ENCODE measurements at regions of chr11 and their contacts with region 1.

Region 1: DNA sequence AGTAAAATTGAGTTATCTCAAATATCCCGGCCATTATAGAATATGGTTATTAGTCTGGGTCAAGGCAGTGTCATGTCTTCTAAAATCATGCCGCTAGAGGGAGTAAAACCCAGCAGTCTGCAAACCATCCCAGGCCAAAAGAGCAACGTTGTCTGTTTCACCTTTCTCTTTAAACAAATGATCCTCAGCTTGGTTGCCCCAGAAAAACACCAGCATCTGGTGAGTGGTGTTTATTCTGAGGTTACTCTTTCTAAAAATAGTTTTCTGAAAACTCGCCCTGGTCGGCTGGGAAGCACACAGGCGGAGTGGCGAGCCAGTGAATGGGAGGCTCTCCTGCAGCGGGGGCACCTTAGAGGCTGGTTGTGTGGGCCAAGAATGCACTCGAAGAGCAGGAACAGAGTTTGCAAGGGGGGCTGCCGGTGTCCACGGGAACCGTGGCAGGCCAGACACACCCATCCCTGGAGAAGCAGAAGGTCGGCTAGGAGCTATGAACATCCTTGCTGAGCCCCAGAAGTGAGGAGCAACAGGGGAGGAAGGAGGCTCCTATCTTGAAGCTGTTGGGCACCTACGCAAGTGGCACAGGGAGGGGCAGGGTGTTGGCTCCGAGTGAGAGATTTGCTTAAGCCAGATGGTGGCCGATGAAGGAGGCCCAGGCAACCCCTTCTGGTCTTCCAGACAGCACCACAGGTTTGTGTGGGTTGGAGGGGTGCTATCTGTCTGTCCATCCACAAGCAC is 297.1 kb downstream of the ETS1 start:
- DNase-seq: peak; percentile 94
- H3K4me3 Mint-ChIP-seq: peak overlapping the region; percentile 93
- H3K27ac Mint-ChIP-seq: peak overlapping the region; percentile 99
- H3K4me1 Mint-ChIP-seq: peaks cover 90% of the 10 kb centered on the region
- H3K27me3 Mint-ChIP-seq: no peaks in the 10 kb centered on the region

Region 2: DNA sequence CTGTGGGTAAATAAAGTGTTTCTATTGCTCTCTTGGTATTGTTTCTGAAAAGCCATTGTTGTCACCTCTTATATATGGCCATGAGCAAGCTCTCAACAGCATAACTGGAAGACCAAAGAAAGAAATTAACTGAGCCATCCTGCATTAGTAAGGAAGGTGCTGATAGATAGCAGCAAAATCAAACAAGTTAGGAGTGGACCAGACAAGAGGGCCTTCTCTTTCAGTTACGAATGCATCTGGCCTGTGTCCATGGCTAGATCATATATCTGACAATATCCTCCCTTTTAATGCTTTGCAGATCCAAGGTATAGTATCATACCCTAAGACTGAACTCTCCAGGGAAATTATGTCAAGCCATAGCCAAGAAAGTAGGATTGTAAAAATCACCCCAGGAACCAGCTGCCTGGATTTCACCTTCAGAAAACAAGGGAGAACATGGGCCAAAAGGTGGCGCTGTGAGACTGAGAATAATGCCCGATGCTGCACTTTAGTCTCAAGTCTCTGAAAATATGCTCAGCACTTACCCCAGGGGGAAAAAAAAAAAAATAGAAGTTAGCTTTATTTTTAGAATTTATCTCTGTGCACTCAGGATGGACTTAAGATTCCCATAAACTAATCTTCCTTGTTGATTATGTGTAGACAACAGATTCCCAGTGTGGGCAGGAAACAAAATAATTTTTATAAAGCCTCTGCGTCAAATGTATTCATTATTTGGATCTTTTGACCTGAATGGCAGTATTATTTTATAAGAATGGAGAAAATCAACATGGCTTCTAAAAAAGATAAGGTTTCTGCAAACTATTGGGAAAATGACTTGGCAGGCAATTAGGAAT is 118.0 kb before region 1 on chr11:
- intact Hi-C with region 1: loop called (anchors 1 kb)
- DNase-seq: peak; percentile 95
- H3K4me3 Mint-ChIP-seq: no peak overlapping the region
- H3K27ac Mint-ChIP-seq: peak overlapping the region; percentile 56
- H3K4me1 Mint-ChIP-seq: peaks cover 25% of the 10 kb centered on the region
- H3K27me3 Mint-ChIP-seq: peaks cover 13% of the 10 kb centered on the region

Region 3: DNA sequence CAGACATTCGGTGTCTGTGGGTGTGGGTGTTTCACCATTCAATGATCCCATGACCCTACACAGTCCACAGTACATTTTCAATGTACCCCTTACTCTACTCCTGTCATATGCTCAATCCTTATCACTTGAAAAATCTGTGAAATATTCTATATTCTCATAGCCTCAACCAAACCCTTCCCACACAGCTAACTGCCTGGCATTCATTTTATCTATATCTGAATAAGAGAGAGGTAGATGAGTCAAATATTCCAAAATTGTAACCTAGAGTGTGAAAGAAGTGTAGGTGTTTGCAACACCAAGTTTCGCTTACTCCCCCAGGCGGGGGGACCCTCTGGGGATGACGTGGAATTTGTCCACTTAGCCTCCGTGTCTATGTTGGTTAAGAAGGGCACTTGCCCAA is 57.7 kb before region 1 on chr11:
- intact Hi-C with region 1: loop called (anchors 1 kb)
- DNase-seq: peak; percentile 68
- H3K4me3 Mint-ChIP-seq: peak overlapping the region; percentile 55
- H3K27ac Mint-ChIP-seq: peak overlapping the region; percentile 90
- H3K4me1 Mint-ChIP-seq: peaks cover 41% of the 10 kb centered on the region
- H3K27me3 Mint-ChIP-seq: no peaks in the 10 kb centered on the region

Region 4: DNA sequence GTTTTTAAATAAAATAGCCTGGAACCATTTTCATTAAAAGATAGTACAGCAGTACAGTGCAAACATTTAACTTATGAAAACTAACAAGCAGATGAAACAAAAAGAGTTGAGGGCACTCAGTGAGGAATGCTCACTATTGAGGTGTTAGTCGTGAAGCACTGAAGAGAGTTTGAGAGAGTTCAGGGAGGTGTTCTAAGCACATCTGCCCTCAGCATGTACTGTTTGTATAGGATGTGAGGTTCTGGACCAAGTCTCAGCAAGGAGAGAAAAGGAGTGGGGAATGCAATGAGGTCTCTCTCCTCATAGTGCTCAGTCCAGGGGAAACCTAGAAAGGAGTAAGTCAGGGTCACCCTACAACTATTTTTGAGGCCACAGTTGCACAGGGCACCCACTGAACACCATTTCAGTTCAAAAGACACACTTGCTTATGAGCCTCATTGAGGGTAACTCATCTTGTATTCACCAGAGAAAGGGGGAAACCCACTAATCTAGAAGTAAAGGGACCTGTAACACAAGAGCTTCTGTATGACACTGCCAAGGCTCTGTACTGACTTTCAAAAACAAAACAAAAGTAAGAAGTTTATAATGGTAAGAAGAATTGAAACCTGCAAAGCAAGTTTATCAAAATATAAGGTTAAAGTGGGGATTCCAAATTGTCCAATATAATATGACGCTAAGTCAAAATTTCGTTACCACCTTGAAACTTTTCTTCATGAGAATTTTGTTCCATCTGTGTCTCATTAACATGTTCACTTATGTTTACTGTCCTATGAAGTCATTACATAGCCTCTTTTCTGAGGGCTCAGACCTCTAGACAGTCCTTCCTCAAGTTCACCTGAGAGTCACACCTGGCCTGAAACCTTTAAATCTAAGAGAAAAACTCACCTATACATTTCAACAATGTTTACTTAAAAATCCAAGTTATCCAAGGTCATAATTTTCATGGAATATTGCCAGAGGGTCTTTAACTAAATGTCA is 21.8 kb after region 1 on chr11:
- intact Hi-C with region 1: no loop called
- DNase-seq: peak; percentile 65
- H3K4me3 Mint-ChIP-seq: peak overlapping the region; percentile 42
- H3K27ac Mint-ChIP-seq: peak overlapping the region; percentile 88
- H3K4me1 Mint-ChIP-seq: peaks cover 57% of the 10 kb centered on the region
- H3K27me3 Mint-ChIP-seq: no peaks in the 10 kb centered on the region

Region 5: GRCh38 chr11:128342511-128343134 is 52.4 kb after region 1 on chr11:
- intact Hi-C with region 1: loop called (anchors 1 kb)
- DNase-seq: peak; percentile 90
- H3K4me3 Mint-ChIP-seq: peak overlapping the region; percentile 24
- H3K27ac Mint-ChIP-seq: peak overlapping the region; percentile 88
- H3K4me1 Mint-ChIP-seq: peaks cover 79% of the 10 kb centered on the region
- H3K27me3 Mint-ChIP-seq: no peaks in the 10 kb centered on the region

Region 6: DNA sequence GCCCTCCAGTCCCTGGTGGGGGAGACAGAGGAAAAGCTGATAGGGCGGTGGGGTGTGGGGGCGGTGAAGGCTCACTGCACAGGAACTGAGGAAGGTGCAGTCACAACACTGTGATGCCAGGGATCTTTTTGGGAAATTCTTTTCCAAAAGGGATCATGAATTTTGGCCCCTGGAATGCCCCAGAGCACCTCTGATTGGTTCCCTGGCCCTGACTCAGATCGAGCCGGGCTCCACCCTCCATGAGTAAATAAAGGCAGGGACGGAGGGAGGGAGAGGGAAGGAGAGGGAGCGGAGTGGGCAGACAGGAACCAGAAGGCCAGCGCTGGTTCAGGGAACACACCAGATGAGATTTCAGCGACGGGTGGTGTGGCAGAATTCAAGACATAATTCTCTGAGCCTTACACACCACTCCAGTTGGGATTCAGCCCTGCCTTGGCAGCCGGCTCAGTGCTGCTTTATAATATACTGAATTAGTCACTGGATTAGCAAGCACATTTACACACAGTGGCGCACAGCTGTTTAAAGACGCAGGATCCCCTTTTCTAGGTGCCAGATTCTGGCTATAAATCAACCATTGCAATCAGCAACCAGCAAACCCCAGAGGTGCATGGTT is 216.8 kb after region 1 on chr11:
- intact Hi-C with region 1: loop called (anchors 1 kb)
- DNase-seq: peak; percentile 78
- H3K4me3 Mint-ChIP-seq: peak overlapping the region; percentile 93
- H3K27ac Mint-ChIP-seq: peak overlapping the region; percentile 98
- H3K4me1 Mint-ChIP-seq: peaks cover 93% of the 10 kb centered on the region
- H3K27me3 Mint-ChIP-seq: no peaks in the 10 kb centered on the region

Region 7: DNA sequence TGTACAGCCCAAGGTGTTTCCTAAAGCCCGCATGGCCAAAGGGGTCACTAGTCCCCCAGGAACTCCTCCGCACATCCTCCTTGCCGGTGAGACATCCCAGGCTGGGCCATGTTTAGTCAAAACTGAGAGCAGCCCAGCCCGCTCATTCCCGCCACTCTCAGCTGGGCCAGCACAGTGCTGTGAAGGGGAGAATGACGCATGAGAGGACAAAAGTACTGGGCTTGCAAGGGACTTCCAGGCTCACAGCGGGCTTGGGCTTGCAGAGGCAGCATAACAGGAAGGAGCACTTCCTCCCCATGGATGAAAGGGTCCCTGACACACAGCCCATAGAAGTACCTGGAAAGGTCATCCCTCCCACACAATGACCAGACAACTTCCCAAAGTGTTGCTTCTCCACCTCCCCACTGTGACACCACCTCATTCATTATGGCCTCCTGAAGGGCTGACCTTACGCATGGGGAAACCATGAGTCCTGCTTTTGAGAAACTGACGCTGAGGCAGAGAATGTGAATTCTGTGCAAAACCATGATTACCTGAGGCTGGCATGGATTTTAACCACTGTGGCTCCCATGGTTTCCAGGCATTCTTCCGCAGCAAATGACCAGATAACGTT is 278.0 kb after region 1 on chr11:
- intact Hi-C with region 1: no loop called
- DNase-seq: no peak
- H3K4me3 Mint-ChIP-seq: no peak overlapping the region
- H3K27ac Mint-ChIP-seq: no peak overlapping the region
- H3K4me1 Mint-ChIP-seq: peaks cover 13% of the 10 kb centered on the region
- H3K27me3 Mint-ChIP-seq: no peaks in the 10 kb centered on the region

Region 8: DNA sequence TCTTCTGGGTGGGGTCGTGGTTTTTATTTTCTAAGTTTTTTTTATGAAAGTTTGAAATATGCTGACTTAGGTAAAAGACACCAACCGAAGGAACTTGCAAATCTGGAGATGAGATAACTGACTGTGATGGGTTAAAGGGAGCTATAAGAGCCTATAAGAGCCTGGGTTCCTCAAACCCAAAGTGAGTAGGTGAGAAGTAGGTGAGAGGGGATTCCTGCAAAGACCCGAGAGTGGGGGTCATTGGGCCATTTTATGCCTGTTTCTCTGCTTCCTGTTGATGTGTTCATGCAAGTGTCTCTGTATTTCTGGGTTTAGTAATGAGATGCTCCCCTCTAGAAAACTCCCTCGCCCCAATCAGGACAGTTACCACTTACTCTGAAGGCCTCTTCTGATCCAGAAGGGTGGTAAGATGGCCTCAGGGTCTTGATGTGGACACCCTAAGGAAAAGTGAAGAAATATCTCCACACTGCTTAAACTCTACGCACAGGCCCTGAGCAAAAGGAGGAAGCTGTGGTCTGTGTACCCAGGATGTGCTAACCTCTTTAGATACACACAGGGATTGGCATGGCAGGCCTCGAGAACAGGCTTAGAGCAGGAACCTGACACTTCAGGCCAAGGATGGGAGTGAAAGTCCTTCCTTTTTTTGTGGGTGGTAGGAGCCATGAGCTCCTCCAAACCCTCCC is 405.4 kb after region 1 on chr11:
- intact Hi-C with region 1: loop called (anchors 2 kb)
- DNase-seq: peak; percentile 83
- H3K4me3 Mint-ChIP-seq: peak overlapping the region; percentile 93
- H3K27ac Mint-ChIP-seq: peak overlapping the region; percentile 92
- H3K4me1 Mint-ChIP-seq: peaks cover 64% of the 10 kb centered on the region
- H3K27me3 Mint-ChIP-seq: peaks cover 19% of the 10 kb centered on the region

Measured in activated CD4-positive, alpha-beta T cell treated with anti-CD3 and anti-CD28 coated beads, Interleukin-2, amount 10 ng/mL, durations not matched to agents 24 days and 14 days (primary cell).